CD8-positive, alpha-beta T cell (primary cell): ENCODE measurements at regions of chr14 and their contacts with region 1.

Region 1: GRCh38 chr14:64891839-64892375 is 12.2 kb upstream of the SPTB start:
- DNase-seq: peak in 4 of 9 experiments; percentile 18 to 77 (median 50)
- ATAC-seq: peak; percentile 92
- H3K4me3 ChIP-seq: no peak overlapping the region
- H3K4me3 Mint-ChIP-seq: no peak overlapping the region
- H3K27ac ChIP-seq: no peak overlapping the region
- H3K27ac Mint-ChIP-seq: no peak overlapping the region
- H3K4me1 ChIP-seq: no peaks in the 10 kb centered on the region
- H3K4me1 Mint-ChIP-seq: no peaks in the 10 kb centered on the region
- H3K27me3 ChIP-seq: peaks cover 0 to 2% of the 10 kb centered on the region in 2 experiments
- H3K27me3 Mint-ChIP-seq: peaks cover 9% of the 10 kb centered on the region
- CTCF ChIP-seq: peak; percentile 72

Region 2: GRCh38 chr14:64338616-64339316 is 553.1 kb before region 1 on chr14:
- CTCF ChIA-PET with region 1: no interaction called
- POLR2A ChIA-PET with region 1: no interaction called
- intact Hi-C with region 1: loop called in 1 of 2 experiments (anchors 5 kb)
- DNase-seq: peak; percentile 54 to 93 (median 85)
- ATAC-seq: peak; percentile 79
- H3K4me3 ChIP-seq: peak overlapping the region; percentile 67 to 87
- H3K4me3 Mint-ChIP-seq: peak overlapping the region; percentile 97
- H3K27ac ChIP-seq: peak overlapping the region; percentile 38 to 58
- H3K27ac Mint-ChIP-seq: peak overlapping the region; percentile 96
- H3K4me1 ChIP-seq: peaks cover 19% of the 10 kb centered on the region
- H3K4me1 Mint-ChIP-seq: peaks cover 26% of the 10 kb centered on the region
- H3K27me3 ChIP-seq: no peaks in the 10 kb centered on the region
- H3K27me3 Mint-ChIP-seq: no peaks in the 10 kb centered on the region
- CTCF ChIP-seq: no peak

Region 3: DNA sequence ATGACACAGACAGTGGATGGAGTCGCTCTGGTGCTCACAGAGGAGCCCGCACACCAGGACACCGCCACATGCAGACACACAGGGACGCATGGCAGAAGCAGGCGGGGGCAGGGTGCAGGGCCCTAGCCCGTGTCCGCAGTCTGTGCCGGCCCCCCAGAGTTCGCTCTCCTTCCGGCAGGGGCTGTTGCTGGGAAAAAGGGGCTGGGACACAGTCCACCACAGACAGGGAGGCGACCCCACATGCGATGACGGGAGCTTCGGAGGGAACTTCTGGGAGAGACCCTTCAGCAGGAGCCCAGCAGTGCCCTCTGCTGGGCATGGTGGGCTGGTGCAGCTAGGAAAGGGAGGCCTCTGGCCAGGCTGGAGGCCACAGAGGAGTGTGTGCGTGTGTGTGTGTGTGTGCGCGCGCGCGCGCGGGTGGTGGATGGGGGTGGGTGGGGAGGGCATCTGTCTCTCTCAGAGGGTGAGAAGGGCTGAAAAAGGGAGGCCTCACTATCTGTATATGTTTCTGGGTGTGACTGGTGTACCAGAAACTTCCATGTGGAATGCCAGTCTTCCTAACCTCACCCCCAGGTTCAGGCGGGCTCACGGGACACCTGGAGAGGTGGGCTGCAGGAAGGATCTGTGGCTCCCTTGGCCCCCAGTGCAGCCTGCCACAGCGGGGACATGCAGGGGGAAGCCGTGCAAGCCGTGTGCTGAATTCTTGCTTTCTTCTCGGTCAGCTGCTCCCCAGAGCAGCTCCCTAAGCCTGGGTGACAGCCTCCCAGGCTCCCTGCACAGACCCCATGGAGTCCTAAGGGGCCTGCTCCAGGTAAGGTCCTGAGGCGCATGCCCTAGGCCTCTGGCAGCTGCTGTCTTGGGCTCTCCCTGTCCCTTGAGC is 127.0 kb before region 1 on chr14:
- CTCF ChIA-PET with region 1: interaction called, 22 read pairs
- POLR2A ChIA-PET with region 1: no interaction called
- intact Hi-C with region 1: loop called (anchors 5 kb)
- DNase-seq: peak; percentile 38 to 82 (median 60)
- ATAC-seq: peak; percentile 91
- H3K4me3 ChIP-seq: peak overlapping the region in 1 of 2 experiments; percentile 28
- H3K4me3 Mint-ChIP-seq: peak overlapping the region; percentile 50
- H3K27ac ChIP-seq: no peak overlapping the region
- H3K27ac Mint-ChIP-seq: no peak overlapping the region
- H3K4me1 ChIP-seq: peaks cover 5% of the 10 kb centered on the region
- H3K4me1 Mint-ChIP-seq: peaks cover 14% of the 10 kb centered on the region
- H3K27me3 ChIP-seq: no peaks in the 10 kb centered on the region
- H3K27me3 Mint-ChIP-seq: no peaks in the 10 kb centered on the region
- CTCF ChIP-seq: peak; percentile 79

Region 4: DNA sequence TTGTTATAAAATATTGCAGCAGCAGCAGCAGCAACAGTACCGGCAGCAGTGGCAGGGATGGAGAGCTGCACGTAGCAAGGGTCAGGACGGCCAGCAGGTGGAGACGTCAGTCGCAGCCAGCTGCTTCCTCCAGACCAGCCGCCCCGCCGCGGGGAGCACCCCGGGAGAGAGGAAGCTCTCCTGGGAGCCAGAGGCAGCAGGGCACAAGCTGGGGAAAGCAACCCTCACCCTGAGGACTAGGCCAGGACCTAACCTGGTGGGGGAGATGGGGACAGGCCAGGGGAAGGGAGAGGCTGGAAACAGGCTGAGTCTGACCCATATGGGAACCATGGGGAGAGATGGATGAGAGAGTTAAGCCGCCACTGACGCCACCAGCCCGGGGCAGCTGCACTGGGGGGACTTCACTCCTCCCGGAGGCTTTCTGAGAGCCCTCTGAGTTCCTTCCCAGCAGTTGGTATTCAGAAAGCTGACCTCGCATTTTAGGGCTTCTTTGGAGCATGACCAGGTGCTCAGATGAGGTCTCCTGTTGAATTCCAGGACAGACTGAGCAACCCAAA is 68.5 kb before region 1 on chr14:
- CTCF ChIA-PET with region 1: interaction called, 187 read pairs
- POLR2A ChIA-PET with region 1: interaction called, 5 read pairs
- intact Hi-C with region 1: loop called (anchors 5 kb)
- DNase-seq: peak; percentile 22 to 77 (median 62)
- ATAC-seq: peak; percentile 89
- H3K4me3 ChIP-seq: no peak overlapping the region
- H3K4me3 Mint-ChIP-seq: no peak overlapping the region
- H3K27ac ChIP-seq: no peak overlapping the region
- H3K27ac Mint-ChIP-seq: no peak overlapping the region
- H3K4me1 ChIP-seq: no peaks in the 10 kb centered on the region
- H3K4me1 Mint-ChIP-seq: peaks cover 6% of the 10 kb centered on the region
- H3K27me3 ChIP-seq: peaks cover 0 to 6% of the 10 kb centered on the region in 2 experiments
- H3K27me3 Mint-ChIP-seq: peaks cover 8% of the 10 kb centered on the region
- CTCF ChIP-seq: peak; percentile 75

Region 5: DNA sequence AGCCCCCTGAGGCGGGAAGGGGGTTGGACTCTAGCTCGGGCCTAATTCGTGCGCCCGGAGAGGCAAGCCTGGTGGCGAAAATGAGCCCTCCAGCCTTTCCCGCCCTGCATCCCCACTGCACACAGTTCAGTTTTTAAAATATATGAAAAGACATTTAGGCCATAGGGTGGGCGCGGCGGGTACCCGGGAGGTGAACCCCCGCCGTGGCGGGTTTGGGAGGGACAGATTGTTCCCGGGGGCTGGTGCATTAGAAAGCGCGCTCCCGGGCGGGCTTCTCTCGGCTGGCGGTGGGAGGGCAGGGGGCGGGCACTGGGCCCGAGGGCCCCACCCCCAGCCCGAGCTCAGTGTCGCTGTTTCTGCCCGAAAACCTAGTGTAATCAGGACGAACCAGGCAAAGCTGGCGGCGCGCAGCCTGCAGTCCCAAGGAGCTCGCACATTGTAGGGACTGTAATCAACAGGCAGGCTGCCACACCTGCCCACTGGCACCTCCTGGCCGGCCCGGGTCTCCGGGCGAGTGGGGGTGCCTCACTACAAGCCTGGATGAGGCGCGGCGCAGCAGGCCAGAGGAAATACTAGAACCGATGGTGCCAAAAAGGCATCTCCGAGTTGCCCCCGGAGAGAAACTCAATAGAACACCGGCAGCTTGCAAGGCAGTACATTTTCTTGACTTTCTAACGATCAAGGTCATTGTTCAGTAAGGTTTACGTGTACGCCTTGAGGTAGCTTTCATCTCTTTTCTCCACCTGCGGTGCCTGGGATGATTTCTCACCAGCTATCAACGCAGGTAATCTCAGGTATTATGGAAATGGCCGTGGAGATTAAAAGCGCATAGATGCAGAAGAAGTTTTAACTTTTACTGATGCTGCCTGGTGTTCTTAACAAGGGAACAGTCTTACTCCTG is 11.4 kb before region 1 on chr14:
- CTCF ChIA-PET with region 1: interaction called, 51 read pairs
- POLR2A ChIA-PET with region 1: no interaction called
- intact Hi-C with region 1: no loop called
- DNase-seq: peak; percentile 22 to 74 (median 59)
- ATAC-seq: peak; percentile 82
- H3K4me3 ChIP-seq: peak overlapping the region; percentile 51 to 62
- H3K4me3 Mint-ChIP-seq: peak overlapping the region; percentile 87
- H3K27ac ChIP-seq: no peak overlapping the region
- H3K27ac Mint-ChIP-seq: no peak overlapping the region
- H3K4me1 ChIP-seq: no peaks in the 10 kb centered on the region
- H3K4me1 Mint-ChIP-seq: peaks cover 8% of the 10 kb centered on the region
- H3K27me3 ChIP-seq: peaks cover 0 to 17% of the 10 kb centered on the region in 2 experiments
- H3K27me3 Mint-ChIP-seq: peaks cover 16% of the 10 kb centered on the region
- CTCF ChIP-seq: no peak

Region 6: GRCh38 chr14:64914237-64914971 is 22.5 kb after region 1 on chr14 and contains the start of gene CHURC1:
- CTCF ChIA-PET with region 1: interaction called, 17 read pairs
- POLR2A ChIA-PET with region 1: interaction called, 3 read pairs
- intact Hi-C with region 1: no loop called
- DNase-seq: peak; percentile 91 to 99 (median 97)
- ATAC-seq: peak; percentile 92
- H3K4me3 ChIP-seq: peak within 1 kb of the TSS; percentile 86 to 98
- H3K4me3 Mint-ChIP-seq: peak within 1 kb of the TSS; percentile 85
- H3K27ac ChIP-seq: peak within 1 kb of the TSS; percentile 98 to 99
- H3K27ac Mint-ChIP-seq: peak within 1 kb of the TSS; percentile 91
- H3K4me1 ChIP-seq: peaks cover 42% of the 10 kb centered on the region
- H3K4me1 Mint-ChIP-seq: peaks cover 47% of the 10 kb centered on the region
- H3K27me3 ChIP-seq: no peaks in the 10 kb centered on the region
- H3K27me3 Mint-ChIP-seq: no peaks in the 10 kb centered on the region
- CTCF ChIP-seq: no peak
- total RNA-seq, gene CHURC1: 43.9 to 46.7 TPM